Mucosa of descending colon (tissue), 3 donors: ENCODE measurements at regions of chr1 and their contacts with region 1.

Region 1: DNA sequence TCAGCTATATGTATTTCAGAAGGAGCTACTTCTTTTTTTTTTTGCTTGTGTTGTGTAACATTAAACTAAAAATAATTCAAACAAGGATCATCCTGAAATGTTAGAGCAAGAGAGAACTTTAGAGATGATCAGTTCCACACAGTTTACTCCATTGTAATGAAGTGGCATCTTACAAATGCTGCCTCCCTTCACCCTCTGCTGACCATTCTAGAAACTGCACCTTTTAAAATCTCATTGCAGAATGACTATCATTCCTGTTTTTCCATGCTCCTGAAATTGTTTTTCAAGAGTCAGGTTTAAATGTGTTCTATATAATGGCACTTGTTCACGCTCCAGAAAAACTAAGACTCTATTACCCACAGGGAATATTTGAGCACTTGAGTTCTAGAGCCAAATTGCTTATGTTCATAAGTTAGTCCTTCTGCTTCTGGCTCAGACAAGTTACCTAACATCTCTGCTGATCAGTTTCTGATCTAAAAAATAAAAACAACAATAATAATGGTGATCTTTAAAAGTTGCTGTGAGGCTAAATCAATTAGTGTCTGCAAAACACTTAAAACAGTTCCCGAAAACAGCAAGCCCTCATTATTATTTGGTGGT is 21.5 kb upstream of the SLC44A5 start:
- DNase-seq: peak in 1 of 3 donors; percentile 24
- ATAC-seq: no peak
- H3K4me3 ChIP-seq: no peak overlapping the region
- H3K4me1 ChIP-seq: no peaks in the 10 kb centered on the region
- CTCF ChIP-seq: no peak

Region 2: DNA sequence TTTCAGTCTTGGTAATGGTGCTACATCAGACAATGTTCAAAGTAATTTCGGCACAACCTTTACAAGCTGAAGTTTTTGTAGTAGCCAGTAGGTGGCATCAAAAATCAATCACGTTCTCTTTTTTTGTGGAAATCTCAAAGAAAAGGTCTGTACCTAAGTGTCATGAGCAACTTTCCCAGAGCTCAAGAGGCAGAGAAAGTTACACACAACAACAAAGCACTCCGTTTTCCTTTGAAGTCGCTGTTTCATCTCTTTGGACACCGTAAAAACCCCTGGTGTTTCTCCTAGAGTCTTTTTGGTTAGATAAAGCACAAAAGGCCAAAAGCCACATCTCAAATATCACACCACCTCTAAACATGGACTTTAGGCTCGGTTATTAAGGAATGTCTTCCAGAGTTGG is 366.7 kb before region 1 on chr1:
- intact Hi-C with region 1: loop called in 1 of 2 experiments (anchors 10 kb)
- DNase-seq: peak in 1 of 3 donors; percentile 6
- ATAC-seq: no peak
- H3K4me3 ChIP-seq: no peak overlapping the region
- H3K4me1 ChIP-seq: no peaks in the 10 kb centered on the region
- CTCF ChIP-seq: no peak